ENCODE measurements at regions of chr2 and their contacts with region 1.

Region 1: DNA sequence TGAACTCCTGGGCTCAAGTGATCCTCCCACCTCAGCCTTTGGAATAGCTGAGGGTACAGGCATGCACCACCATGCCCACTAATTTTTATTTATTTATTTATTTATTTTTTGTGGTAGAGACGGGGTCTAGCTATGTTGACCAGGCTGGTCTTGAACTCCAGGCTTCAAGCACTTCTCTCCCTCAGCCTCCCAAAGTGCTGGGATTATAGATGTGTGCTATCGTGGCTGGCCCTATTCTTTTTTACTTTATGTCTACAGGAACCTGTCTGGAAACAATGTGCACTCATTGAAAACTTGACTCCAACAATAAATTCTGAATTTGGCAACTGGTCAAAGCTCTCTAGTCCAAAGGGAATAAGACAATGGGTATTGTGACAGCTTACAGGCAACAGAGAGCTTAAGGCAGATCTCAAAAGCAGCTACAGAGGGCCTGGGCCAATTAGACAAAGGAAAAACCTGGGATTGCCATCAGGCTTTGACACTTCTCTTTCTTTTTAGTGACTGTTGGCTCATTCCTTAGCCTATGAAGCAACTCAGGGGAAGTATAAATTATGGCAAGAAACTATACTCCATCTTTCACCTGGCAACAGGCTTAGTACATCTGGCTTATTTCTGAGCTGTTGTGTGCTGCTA is 55.1 kb upstream of the RAPGEF4 start:
- DNase-seq: no peak

Region 2: DNA sequence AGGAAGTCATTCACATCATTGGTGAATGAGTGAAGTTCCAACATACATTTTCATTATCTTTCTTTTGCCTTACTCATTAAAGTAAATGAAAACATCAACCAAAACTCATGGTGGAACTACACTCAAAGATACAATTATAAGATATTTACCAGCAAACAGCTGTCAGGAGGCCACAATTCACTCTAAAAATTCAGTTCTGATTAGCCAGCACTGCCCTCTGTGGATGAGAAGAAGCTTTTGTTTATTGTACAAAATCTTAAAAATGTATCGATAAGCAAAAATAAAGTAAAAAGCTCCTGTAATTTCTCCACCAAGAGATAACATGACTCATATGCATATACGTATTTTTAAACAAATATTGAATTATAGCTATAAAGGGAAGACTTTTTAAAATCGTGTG is 18.5 kb before region 1 on chr2:
- intact Hi-C with region 1: no loop called
- DNase-seq: no peak

Region 3: DNA sequence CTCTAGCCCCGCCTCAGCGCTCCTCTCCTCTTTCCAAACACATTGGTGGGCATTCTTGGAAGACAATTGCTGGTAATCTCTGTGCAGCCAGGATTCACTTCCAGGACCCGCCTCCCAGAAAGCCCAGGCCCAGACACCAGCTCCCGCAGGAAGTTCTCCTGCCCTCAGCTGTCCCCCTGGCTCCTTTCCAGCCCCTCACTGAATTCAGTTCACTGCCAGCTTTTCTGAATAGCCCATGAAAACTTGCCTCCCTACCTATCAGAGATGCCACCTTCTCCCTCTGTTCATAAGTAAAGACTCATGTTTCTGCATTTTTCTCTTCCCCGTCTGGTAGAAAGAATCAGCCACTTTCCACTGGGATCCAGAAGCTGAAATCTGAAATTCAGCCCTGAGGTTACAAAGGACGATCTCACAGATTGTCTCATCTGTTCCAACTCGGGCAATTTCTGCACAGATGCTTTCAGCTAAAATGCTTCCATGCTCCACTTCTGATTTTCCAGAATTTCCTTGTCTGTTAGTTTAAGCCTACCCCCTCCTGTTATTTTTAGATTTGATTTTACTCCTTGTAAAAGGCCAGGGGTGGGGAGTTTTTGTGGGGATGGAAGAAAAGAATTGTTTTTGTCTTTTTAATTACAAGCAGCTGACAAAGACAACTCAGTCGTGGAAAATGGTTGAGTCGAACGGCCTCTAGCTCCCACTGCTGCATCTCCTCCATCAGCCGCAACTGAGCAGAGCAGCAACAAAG is 1186.5 kb after region 1 on chr2:
- intact Hi-C with region 1: loop called in 1 of 2 experiments (anchors 5 kb)
- DNase-seq: no peak